MCF 10A (cell line): ENCODE measurements at regions of chr2 and their contacts with region 1.

Region 1: DNA sequence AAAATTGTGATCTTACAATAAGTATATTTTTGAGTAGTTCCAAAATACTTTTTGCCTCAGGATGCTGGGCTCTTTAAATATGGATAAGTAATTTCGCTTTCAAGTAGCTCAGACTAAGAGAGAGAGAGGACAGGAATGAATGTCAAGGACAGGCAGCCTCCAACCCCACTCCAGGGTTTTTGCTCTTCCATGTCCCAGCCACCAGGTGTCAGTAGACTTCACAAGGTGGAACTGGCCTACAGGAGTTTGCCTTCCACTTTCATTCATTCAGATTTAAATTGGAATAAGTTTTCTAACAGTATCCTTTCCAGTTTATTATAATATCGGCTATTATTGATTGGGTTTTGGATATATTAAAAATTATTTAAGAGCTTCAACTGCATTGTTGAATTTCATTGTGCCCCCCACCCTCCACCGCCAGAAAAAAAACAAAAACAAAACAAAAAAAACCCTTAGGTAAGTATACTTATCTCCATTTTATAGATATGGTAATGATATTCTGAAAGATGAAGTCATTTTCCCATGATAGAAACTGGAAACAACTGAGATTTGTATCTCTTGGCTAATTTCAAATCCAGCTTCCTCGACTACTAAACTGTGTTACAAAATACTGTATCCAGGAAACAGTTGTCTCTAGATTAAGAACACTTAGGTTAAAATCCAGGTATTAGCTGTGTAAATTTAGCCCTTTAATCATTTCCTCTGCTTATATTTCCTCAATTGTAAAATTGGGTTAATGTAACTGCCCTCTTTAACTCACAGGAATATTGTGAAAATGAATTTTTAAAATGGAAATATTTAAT is 793.1 kb downstream of the ERBB4 start:
- DNase-seq: peak; percentile 69
- H3K4me3 Mint-ChIP-seq: no peak overlapping the region
- H3K27ac Mint-ChIP-seq: no peak overlapping the region
- H3K4me1 Mint-ChIP-seq: no peaks in the 10 kb centered on the region
- H3K27me3 Mint-ChIP-seq: peaks cover 47% of the 10 kb centered on the region
- CTCF ChIP-seq: peak; percentile 79

Region 2: DNA sequence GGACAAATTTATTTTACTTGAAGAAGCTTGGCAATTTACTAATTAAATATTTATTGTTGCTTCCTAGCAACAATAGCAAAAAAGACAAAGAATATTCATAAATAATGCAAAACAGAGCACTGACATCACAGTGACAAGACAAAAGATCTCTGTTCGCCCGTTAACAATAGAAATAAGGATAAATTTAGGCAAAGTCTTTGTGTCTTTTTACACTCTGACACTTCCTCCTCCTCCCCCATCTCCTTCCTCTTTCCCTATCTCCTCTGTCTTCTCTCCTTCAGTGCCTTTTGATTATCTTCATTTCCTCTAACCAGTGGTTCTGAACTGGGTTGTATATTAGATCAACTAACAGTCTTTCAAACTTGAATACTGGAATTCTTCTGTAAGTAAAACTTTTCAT is 15.3 kb before region 1 on chr2:
- CTCF ChIA-PET with region 1: interaction called, 19 read pairs
- POLR2A ChIA-PET with region 1: no interaction called
- intact Hi-C with region 1: no loop called
- DNase-seq: no peak
- H3K4me3 Mint-ChIP-seq: no peak overlapping the region
- H3K27ac Mint-ChIP-seq: no peak overlapping the region
- H3K4me1 Mint-ChIP-seq: no peaks in the 10 kb centered on the region
- H3K27me3 Mint-ChIP-seq: peaks cover 21% of the 10 kb centered on the region
- CTCF ChIP-seq: no peak

Region 3: GRCh38 chr2:211977433-211977832 is 231.9 kb after region 1 on chr2:
- CTCF ChIA-PET with region 1: no interaction called
- POLR2A ChIA-PET with region 1: no interaction called
- intact Hi-C with region 1: loop called (anchors 10 kb)
- DNase-seq: peak; percentile 2
- H3K4me3 Mint-ChIP-seq: no peak overlapping the region
- H3K27ac Mint-ChIP-seq: no peak overlapping the region
- H3K4me1 Mint-ChIP-seq: no peaks in the 10 kb centered on the region
- H3K27me3 Mint-ChIP-seq: peaks cover 39% of the 10 kb centered on the region
- CTCF ChIP-seq: no peak

Region 4: GRCh38 chr2:212249451-212249850 is 504.0 kb after region 1 on chr2:
- CTCF ChIA-PET with region 1: interaction called, 6 read pairs
- POLR2A ChIA-PET with region 1: no interaction called
- intact Hi-C with region 1: loop called (anchors 2 kb)
- DNase-seq: no peak
- H3K4me3 Mint-ChIP-seq: no peak overlapping the region
- H3K27ac Mint-ChIP-seq: no peak overlapping the region
- H3K4me1 Mint-ChIP-seq: no peaks in the 10 kb centered on the region
- H3K27me3 Mint-ChIP-seq: peaks cover 74% of the 10 kb centered on the region
- CTCF ChIP-seq: peak; percentile 31